T47D (cell line): ENCODE measurements at regions of chr3 and their contacts with region 1.

Region 1: GRCh38 chr3:153595186-153595815 is 433.3 kb downstream of the RAP2B start:
- DNase-seq: peak; percentile 35 to 71

Region 2: GRCh38 chr3:153041181-153041580 is 554.1 kb before region 1 on chr3:
- in situ Hi-C with region 1: no loop called
- DNase-seq: no peak

Region 3: DNA sequence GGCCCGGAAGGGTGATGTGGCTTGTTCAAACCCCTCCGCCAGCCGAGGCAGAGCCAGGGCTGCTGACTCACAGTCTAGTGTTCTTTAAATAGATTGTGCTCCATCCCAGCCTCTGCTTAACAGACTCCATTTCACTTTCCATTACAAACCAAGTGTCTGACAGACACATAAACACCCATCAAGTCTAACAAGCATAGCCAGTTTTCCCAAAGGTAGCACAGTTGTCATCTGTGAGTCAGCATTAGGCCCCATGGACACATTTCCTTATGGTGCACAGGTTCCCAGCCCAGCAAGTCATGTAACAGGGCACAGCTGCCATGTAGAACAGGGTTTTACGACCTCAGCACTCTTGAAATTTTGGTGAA is 543.2 kb before region 1 on chr3:
- in situ Hi-C with region 1: loop called (anchors 25 kb)
- DNase-seq: peak in 1 of 2 experiments; percentile 86

Region 4: DNA sequence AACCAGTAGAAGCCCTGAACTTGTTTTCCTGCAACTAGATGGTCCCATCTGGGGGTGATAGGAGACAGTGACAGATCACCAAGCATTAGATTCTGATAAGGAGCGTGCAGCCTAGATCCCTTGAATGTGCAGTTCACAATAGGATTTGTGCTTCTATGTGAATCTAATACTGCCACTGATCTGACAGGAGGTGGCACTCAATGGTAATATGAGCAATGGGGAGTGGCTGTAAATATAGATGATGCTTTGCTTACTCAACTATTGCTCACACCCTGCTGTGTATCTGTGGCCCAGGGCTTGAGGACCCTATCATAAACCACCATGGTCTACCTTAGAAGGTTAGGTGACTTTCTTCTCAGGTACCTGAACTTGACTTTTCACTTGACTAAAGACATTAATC is 108.8 kb after region 1 on chr3:
- in situ Hi-C with region 1: no loop called
- DNase-seq: no peak

Region 5: GRCh38 chr3:154334973-154335420 is 739.7 kb after region 1 on chr3:
- in situ Hi-C with region 1: no loop called
- DNase-seq: peak; percentile 19 to 66